ENCODE measurements at regions of chr10 and their contacts with region 1.

Region 1: DNA sequence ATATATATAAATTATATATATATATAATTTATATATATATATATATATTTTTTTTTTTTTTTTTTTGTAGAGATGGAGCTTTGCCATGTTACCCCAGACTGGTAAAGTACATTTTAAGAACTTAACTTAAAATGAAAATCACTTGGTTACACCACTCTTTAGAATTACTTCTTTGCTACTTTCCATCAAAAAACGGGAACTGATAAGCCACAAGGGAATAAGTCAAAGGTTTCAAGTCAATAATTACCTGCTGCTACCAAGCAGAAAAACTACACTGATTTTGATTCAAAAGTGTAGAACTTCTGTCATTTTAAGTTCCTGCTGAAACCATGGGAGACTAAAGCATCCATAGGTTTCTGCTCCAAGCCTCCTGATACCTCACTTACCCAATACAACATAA is 12.2 kb downstream of the PPA1 start:
- DNase-seq: no peak
- ATAC-seq: no peak
- H3K4me3 ChIP-seq: no peak overlapping the region
- H3K27ac ChIP-seq: no peak overlapping the region
- H3K4me1 ChIP-seq: 0 out of 5 replicates have a peak, but pooled peaks cover 0 to 3% of the 10 kb centered on the region in 2 experiments
- H3K27me3 ChIP-seq: no peaks in the 10 kb centered on the region
- CTCF ChIP-seq: no peak
- EP300 ChIP-seq: no peak
- POLR2A ChIP-seq: no peak
- RAD21 ChIP-seq: no peak

Region 2: DNA sequence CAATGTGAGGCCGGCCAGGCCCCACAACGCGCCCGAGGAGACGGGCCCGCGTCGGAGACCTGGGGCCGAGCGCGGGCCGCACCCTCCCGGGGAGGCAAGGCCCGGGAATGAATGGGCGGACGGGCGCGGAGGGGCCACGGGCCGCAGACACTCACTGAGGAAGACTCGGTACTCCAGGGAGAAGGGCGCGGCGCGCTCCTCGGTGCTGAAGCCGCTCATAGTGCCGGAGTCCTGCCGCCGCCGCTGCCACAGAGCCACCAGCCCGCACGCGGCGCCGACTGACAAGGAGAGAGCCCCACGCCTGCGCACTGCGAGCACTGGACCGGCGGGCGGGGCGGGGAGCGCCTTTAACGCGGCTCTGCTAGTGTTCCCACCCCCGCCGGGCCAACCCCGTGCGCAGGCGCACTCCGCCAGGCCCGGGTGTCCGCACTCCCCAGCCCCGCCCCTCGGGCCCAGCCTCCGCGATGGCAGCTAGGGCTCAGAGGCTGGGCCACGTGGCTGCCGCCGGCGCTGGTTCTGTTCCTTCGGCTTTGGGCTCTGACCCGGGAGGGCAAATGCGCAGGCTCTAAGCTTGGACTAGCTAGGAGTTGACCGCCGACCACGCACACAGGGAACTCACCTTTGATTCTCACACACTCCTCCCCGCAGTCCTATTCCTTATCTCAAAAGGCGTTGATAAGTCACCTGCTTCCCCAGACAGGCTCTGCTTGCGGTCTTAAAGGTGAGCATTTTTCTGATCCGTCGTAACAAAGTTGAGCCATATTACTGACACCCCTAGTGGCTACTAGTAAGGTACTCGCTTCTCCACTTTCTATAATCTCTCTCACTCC is 12.3 kb after region 1 on chr10 and contains the start of gene PPA1:
- CTCF ChIA-PET with region 1: no interaction called
- POLR2A ChIA-PET with region 1: interaction called, 20 read pairs
- in situ Hi-C with region 1: no loop called
- intact Hi-C with region 1: no loop called
- DNase-seq: peak; percentile 99 to 100 (median 100)
- ATAC-seq: peak; percentile 92
- H3K4me3 ChIP-seq: peak within 1 kb of the TSS; percentile 83
- H3K27ac ChIP-seq: peak within 1 kb of the TSS; percentile 84
- H3K4me1 ChIP-seq: peaks cover 13 to 23% of the 10 kb centered on the region in 2 experiments; a peak in 4 of 5 replicates
- H3K27me3 ChIP-seq: no peaks in the 10 kb centered on the region
- CTCF ChIP-seq: peak in 2 of 3 experiments; percentile 48 to 50; a peak in 3 of 6 replicates
- EP300 ChIP-seq: no peak; the same call in 1 of the 2 replicates
- POLR2A ChIP-seq: peak; percentile 95
- RAD21 ChIP-seq: 0 out of 4 replicates have a peak, but pooled peaks of 1 of the 2 experiments have one; percentile 6
- polyA plus RNA-seq, gene PPA1: 301 to 366 TPM

Region 3: DNA sequence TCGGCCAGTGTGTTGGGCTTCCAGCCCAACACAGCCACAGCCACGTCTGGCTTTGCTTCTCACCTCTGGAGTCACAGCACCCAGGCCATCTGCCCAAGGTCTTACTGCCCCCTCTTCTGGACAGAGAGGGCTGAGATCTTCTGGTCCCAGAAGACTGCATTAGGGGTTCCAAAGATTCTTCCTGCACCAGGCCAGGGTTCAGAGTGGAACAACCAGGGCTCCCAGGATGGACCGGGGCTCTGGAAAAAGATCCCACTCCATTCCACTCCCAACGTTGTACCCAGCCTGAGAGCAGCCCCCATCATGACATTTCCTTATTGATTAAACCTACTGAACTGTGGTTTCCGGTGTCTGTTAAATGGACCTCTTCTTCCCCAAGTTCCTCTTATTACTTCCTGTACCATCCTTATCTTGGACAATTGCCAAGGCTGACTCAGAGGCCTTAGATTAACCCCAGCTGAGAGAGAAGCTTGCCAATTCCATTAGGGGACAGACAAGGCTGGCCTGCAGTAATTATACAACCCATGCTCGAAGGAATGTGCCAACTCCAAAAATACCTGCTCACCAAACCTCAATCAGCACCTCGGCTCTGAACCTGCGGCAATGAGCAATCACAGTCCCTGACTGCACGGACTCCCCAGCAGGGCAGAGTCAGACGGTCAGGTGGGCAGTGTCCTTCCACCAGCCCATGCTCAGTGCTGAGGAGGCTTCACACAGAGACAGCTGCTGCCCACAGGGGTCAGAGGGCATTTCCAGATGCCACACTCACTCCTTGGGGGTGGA is 110.6 kb after region 1 on chr10:
- CTCF ChIA-PET with region 1: interaction called, 3 read pairs
- POLR2A ChIA-PET with region 1: interaction called, 3 read pairs
- in situ Hi-C with region 1: no loop called
- intact Hi-C with region 1: loop called (anchors 1 kb)
- DNase-seq: peak; percentile 84 to 95 (median 87)
- ATAC-seq: peak; percentile 92
- H3K4me3 ChIP-seq: no peak overlapping the region; the same call in 1 of the 2 replicates
- H3K27ac ChIP-seq: peak overlapping the region; percentile 60; the same call in 2 of the 3 replicates
- H3K4me1 ChIP-seq: peaks cover 14 to 23% of the 10 kb centered on the region in 2 experiments
- H3K27me3 ChIP-seq: no peaks in the 10 kb centered on the region
- CTCF ChIP-seq: peak; percentile 70 to 73 (median 73)
- EP300 ChIP-seq: peak; percentile 77
- POLR2A ChIP-seq: no peak
- RAD21 ChIP-seq: peak; percentile 51 to 78

Region 4: DNA sequence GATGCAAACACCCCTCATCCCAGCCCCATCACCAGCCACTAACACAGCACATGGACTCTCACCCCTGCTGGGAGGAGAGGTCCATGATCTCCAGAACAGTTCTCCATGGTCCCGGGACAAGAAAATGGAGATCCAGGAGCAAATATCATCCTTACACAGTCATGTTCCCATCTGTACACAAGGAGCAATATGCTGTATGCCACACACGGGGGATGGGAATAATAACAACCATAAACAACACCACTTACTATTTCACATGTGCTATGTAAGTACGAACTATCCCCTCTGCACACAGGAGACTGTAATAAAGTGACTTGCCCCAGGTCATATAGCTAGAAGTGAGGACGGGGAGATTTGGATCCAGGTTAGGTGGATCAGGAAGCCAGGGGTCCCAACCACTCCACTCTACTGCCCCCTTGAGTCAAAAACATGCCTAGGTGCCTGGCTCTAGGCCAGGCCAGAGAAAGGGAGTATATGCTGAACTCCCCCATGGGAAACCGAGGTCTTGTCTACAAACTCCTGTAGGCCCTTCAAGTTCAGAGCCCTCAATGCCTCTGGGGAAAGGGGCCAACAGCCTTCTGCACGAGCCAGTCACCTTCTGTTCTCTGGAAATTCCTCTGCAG is 127.3 kb after region 1 on chr10:
- CTCF ChIA-PET with region 1: interaction called, 4 read pairs
- POLR2A ChIA-PET with region 1: interaction called, 4 read pairs
- in situ Hi-C with region 1: no loop called
- intact Hi-C with region 1: loop called (anchors 1 kb)
- DNase-seq: peak; percentile 81 to 84 (median 82)
- ATAC-seq: peak; percentile 98
- H3K4me3 ChIP-seq: no peak overlapping the region
- H3K27ac ChIP-seq: no peak overlapping the region
- H3K4me1 ChIP-seq: no peaks in the 10 kb centered on the region
- H3K27me3 ChIP-seq: peaks cover 0 to 5% of the 10 kb centered on the region in 2 experiments; a peak in 3 of 5 replicates
- CTCF ChIP-seq: peak; percentile 86 to 90 (median 87)
- EP300 ChIP-seq: no peak; the same call in 1 of the 2 replicates
- POLR2A ChIP-seq: no peak
- RAD21 ChIP-seq: peak; percentile 73 to 92

Region 5: DNA sequence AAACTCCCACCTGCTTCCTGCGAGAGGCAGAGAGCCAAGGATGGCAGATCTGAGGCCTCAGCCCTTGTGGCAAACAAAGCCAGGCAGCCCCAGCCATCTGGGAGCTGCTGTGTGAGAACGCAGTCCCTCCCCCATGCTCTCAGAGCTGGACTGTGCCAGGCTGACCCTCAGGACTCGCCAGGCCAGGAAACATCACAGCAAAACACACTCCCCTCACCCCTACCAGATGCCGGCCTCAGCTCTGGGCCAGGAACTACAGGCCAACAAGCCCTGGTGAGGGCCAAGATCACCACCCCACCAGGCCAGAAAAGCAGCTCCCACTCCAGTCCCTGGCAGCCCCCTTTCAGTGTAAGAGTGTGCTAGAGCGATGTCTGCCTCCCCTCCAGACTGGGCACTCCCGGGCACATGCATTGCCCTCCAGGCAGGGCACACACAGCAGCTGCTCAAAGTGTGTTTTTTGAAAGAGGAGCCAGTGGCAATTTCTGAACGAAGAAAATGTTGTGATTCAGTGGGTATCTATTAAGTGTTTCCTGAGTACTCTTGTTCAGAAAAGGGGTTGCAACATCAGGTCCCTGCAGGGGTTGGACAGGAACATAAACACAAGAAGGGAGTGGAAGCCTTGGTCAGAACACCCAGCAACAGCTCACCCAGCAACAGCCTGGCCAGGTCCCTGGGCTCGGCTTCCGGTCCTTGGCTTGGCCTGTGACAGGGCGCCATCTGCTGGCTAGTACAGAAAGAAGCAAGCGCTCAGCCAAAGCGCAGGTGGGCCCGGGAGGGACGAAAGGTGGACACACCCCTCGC is 143.1 kb after region 1 on chr10:
- CTCF ChIA-PET with region 1: interaction called, 77 read pairs
- POLR2A ChIA-PET with region 1: interaction called, 16 read pairs
- in situ Hi-C with region 1: loop called (anchors 5 kb)
- intact Hi-C with region 1: loop called (anchors 1 kb)
- DNase-seq: peak; percentile 85 to 93 (median 92)
- ATAC-seq: peak; percentile 100
- H3K4me3 ChIP-seq: no peak overlapping the region
- H3K27ac ChIP-seq: no peak overlapping the region
- H3K4me1 ChIP-seq: peaks cover 5 to 12% of the 10 kb centered on the region in 2 experiments; a peak in 4 of 5 replicates
- H3K27me3 ChIP-seq: peaks cover 0 to 4% of the 10 kb centered on the region in 2 experiments; a peak in 1 of 5 replicates
- CTCF ChIP-seq: peak; percentile 97 to 98 (median 97)
- EP300 ChIP-seq: 0 out of 2 replicates have a peak, but pooled peaks have one; percentile 7
- POLR2A ChIP-seq: no peak
- RAD21 ChIP-seq: peak; percentile 99